ENCODE measurements at regions of chr12 and their contacts with region 1.

Region 1: GRCh38 chr12:6533923-6534694 is at the start of gene GAPDH:
- DNase-seq: peak in 8 of 10 donors; percentile 69 to 91 (median 82)
- ATAC-seq: peak; percentile 58 to 68
- H3K4me3 Mint-ChIP-seq: peak within 1 kb of the TSS; percentile 87 to 97 (median 92)
- H3K27ac Mint-ChIP-seq: peak within 1 kb of the TSS; percentile 94 to 99 (median 98)
- H3K4me1 Mint-ChIP-seq: peaks cover 18 to 51% (median 50%) of the 10 kb centered on the region in 4 donors
- H3K27me3 Mint-ChIP-seq: no peaks in the 10 kb centered on the region
- polyA plus RNA-seq, gene GAPDH: 1,014 to 1,110 (median 1,062) TPM

Region 2: GRCh38 chr12:6434205-6435140 is 99.6 kb before region 1 on chr12:
- POLR2A ChIA-PET with region 1: interaction called, 15 read pairs
- DNase-seq: peak in 7 of 10 donors; percentile 17 to 58 (median 44)
- ATAC-seq: peak; percentile 93 to 98
- H3K4me3 Mint-ChIP-seq: peak overlapping the region; percentile 51 to 86 (median 69)
- H3K27ac Mint-ChIP-seq: peak overlapping the region; percentile 92 to 98 (median 96)
- H3K4me1 Mint-ChIP-seq: peaks cover 22 to 48% (median 44%) of the 10 kb centered on the region in 4 donors
- H3K27me3 Mint-ChIP-seq: no peaks in the 10 kb centered on the region

Region 3: DNA sequence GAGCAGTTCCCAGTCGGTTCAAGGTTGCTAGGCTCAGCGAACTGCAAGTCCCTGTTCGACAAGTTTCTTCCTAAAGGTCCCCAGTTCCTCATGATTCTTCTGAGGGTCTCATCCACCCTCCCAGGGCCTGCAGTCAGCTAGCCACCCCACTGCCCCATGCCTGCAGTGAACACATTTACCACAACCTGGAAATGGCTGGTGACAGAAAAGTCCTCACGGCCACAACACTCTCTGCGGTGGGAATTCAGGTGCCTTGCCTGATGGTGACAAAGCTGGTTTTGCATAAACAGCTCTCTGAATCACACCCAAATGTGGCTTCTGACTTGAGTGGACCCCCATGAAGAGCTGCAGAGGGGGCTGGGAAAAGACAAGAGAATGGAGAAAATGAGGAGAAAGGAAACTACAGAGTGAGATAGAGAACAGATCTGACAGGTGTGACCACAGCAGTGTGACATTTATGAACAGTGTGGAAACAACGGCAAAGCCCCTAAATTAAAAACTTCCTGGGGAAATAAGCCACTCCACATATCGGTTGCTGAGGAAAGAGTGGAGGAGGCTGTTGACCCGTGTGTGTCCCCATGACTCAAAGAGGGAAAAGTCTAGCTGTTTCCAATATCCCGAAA is 90.6 kb before region 1 on chr12:
- POLR2A ChIA-PET with region 1: interaction called, 64 read pairs
- DNase-seq: no peak
- ATAC-seq: peak in 1 of 2 donors; percentile 27
- H3K4me3 Mint-ChIP-seq: peak overlapping the region; percentile 84 to 100 (median 99)
- H3K27ac Mint-ChIP-seq: peak overlapping the region; percentile 87 to 99 (median 96)
- H3K4me1 Mint-ChIP-seq: peaks cover 40 to 70% (median 60%) of the 10 kb centered on the region in 4 donors
- H3K27me3 Mint-ChIP-seq: no peaks in the 10 kb centered on the region

Region 4: GRCh38 chr12:6461401-6462233 is 72.5 kb before region 1 on chr12:
- POLR2A ChIA-PET with region 1: interaction called, 80 read pairs
- DNase-seq: peak; percentile 59 to 93 (median 83)
- ATAC-seq: peak; percentile 79 to 93
- H3K4me3 Mint-ChIP-seq: peak overlapping the region; percentile 67 to 89 (median 81)
- H3K27ac Mint-ChIP-seq: peak overlapping the region; percentile 94 to 100 (median 98)
- H3K4me1 Mint-ChIP-seq: peaks cover 63 to 94% (median 91%) of the 10 kb centered on the region in 4 donors
- H3K27me3 Mint-ChIP-seq: no peaks in the 10 kb centered on the region

Region 5: DNA sequence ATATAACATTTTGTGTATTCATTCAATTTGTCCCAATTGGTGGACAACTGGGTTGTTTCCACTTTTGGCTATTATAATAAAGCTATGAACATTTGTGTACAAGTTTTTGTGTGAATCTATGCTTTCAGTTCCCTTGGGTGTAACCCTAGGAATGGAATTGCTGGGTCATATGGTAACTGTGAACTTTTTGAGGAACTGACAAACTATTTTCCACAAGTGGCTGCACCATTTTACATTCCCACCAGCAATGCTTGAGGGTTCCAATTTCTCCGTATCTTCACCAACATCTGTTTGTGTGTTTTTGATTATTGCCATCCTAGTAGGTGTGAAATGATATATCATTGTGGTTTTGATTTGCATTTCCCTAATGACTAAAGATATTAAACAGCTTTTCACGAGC is 471.2 kb after region 1 on chr12:
- POLR2A ChIA-PET with region 1: no interaction called
- DNase-seq: no peak
- ATAC-seq: no peak
- H3K4me3 Mint-ChIP-seq: no peak overlapping the region
- H3K27ac Mint-ChIP-seq: peak overlapping the region in 2 of 10 donors; percentile 6 to 12
- H3K4me1 Mint-ChIP-seq: peaks cover 8 to 33% (median 14%) of the 10 kb centered on the region in 4 donors
- H3K27me3 Mint-ChIP-seq: no peaks in the 10 kb centered on the region

Measured in naive thymus-derived CD8-positive, alpha-beta T cell (primary cell).